Activated CD4-positive, alpha-beta memory T cell treated with anti-CD3 and anti-CD28 coated beads, Interleukin-2, amount 10 ng/mL, durations not matched to agents 7 days and 5 days (primary cell): ENCODE measurements at regions of chr17 and their contacts with region 1.

Region 1: GRCh38 chr17:5226940-5227878 is 7.5 kb downstream of the SCIMP start:
- DNase-seq: no peak
- H3K4me3 Mint-ChIP-seq: no peak overlapping the region
- H3K27ac Mint-ChIP-seq: peak overlapping the region; percentile 21
- H3K4me1 Mint-ChIP-seq: peaks cover 19% of the 10 kb centered on the region
- H3K27me3 Mint-ChIP-seq: no peaks in the 10 kb centered on the region

Region 2: DNA sequence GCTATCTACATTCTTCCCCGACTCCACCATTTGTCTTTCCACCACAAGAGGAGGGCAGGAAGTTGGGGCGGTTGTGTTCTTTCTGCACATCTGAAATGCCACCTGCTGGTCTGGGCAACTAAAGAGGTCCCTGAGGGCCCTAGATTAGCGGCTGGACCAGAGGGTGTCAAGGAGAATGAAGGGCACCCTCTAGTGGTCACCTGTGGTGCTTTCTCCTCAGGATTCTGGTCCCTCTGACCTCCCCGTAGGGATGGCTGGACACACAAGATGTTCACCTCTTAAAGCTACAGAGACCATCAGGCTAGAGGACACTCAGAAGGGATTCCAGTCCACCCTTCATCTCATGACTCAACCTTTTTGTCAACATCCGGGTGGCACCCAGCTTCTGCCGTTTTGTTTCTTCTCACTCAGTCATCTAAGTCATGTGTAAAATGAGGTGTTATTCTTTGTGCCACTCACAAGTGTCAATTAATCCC is 10.4 kb after region 1 on chr17:
- CTCF ChIA-PET with region 1: interaction called, 15 read pairs
- POLR2A ChIA-PET with region 1: no interaction called
- DNase-seq: peak; percentile 50
- H3K4me3 Mint-ChIP-seq: no peak overlapping the region
- H3K27ac Mint-ChIP-seq: no peak overlapping the region
- H3K4me1 Mint-ChIP-seq: peaks cover 16% of the 10 kb centered on the region
- H3K27me3 Mint-ChIP-seq: no peaks in the 10 kb centered on the region